Psoas muscle (tissue), 8 donors: ENCODE measurements at regions of chr7 and their contacts with region 1.

Region 1: GRCh38 chr7:100852048-100852872 is at the start of gene SLC12A9:
- DNase-seq: peak; percentile 92 to 94
- ATAC-seq: peak; percentile 98 to 100 (median 99)
- H3K4me3 ChIP-seq: peak within 1 kb of the TSS; percentile 71
- H3K27ac ChIP-seq: peak within 1 kb of the TSS; percentile 43
- H3K4me1 ChIP-seq: peaks cover 8% of the 10 kb centered on the region
- H3K27me3 ChIP-seq: no peaks in the 10 kb centered on the region
- CTCF ChIP-seq: peak; percentile 78
- total RNA-seq, gene SLC12A9: 2.9 to 4.7 (median 3.9) TPM

Region 2: GRCh38 chr7:100705753-100706671 is 146.2 kb before region 1 on chr7 and contains the start of gene POP7:
- intact Hi-C with region 1: loop called (anchors 5 kb)
- DNase-seq: peak; percentile 99 to 100
- ATAC-seq: peak; percentile 99
- H3K4me3 ChIP-seq: peak within 1 kb of the TSS; percentile 80
- H3K27ac ChIP-seq: peak within 1 kb of the TSS; percentile 89
- H3K4me1 ChIP-seq: peaks cover 13% of the 10 kb centered on the region
- H3K27me3 ChIP-seq: no peaks in the 10 kb centered on the region
- CTCF ChIP-seq: no peak
- total RNA-seq, gene POP7: 28.4 to 44.4 (median 39.4) TPM

Region 3: GRCh38 chr7:100803398-100804233 is 48.6 kb before region 1 on chr7:
- intact Hi-C with region 1: loop called (anchors 1 to 5 kb)
- DNase-seq: peak; percentile 79 to 80
- ATAC-seq: peak; percentile 87 to 91 (median 90)
- H3K4me3 ChIP-seq: no peak overlapping the region
- H3K27ac ChIP-seq: no peak overlapping the region
- H3K4me1 ChIP-seq: peaks cover 6% of the 10 kb centered on the region
- H3K27me3 ChIP-seq: peaks cover 0 to 17% (median 7%) of the 10 kb centered on the region in 3 donors
- CTCF ChIP-seq: no peak